Activated T-helper 2 cell treated with anti-CD3 and anti-CD28 coated beads, Interferon-gamma antibody, Interleukin-2, Interleukin-4, amounts not matched to agents 10 μg/mL and 5 μg/mL and 100 μg/mL, durations not matched to agents 14 hours and 24 hours and 36 hours (primary cell): ENCODE measurements at regions of chr20 and their contacts with region 1.

Region 1: GRCh38 chr20:50987592-50988210 is 29.1 kb downstream of the MOCS3 start:
- DNase-seq: peak; percentile 39
- H3K4me3 Mint-ChIP-seq: no peak overlapping the region
- H3K27ac Mint-ChIP-seq: no peak overlapping the region
- H3K4me1 Mint-ChIP-seq: peaks cover under 1% of the 10 kb centered on the region
- H3K27me3 Mint-ChIP-seq: peaks cover 14% of the 10 kb centered on the region

Region 2: GRCh38 chr20:51001758-51002157 is 14.1 kb after region 1 on chr20:
- intact Hi-C with region 1: no loop called
- DNase-seq: no peak
- H3K4me3 Mint-ChIP-seq: no peak overlapping the region
- H3K27ac Mint-ChIP-seq: no peak overlapping the region
- H3K4me1 Mint-ChIP-seq: no peaks in the 10 kb centered on the region
- H3K27me3 Mint-ChIP-seq: peaks cover 10% of the 10 kb centered on the region

Region 3: DNA sequence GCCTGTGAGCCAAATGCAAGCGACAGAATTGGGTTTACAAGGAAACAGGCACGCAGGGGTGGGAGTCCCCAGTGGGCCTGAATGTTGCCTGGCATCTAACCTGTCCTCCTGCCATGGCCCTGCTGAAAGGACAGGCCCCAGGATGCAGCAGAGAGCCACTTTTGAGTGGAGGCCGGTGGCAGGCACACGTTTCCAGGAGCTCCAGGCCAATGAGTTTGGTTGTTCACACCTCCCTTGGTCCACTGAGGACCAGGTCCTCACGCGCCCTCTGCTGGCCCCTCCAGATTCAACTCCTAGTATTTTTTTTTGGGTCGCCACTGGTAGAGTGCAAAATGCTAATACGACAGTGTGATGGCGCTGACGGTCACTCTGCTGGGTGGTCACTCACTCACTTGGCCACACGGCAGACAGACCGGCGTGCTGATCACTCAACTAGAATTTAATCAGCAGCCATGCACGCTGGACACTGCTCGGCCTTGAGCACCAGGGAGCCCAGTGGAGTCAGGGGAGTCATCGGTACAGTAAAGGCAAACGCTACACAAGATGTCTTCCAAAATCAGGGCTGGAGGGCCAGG is 636.5 kb after region 1 on chr20:
- intact Hi-C with region 1: loop called (anchors 10 kb)
- DNase-seq: peak; percentile 44
- H3K4me3 Mint-ChIP-seq: no peak overlapping the region
- H3K27ac Mint-ChIP-seq: no peak overlapping the region
- H3K4me1 Mint-ChIP-seq: peaks cover 15% of the 10 kb centered on the region
- H3K27me3 Mint-ChIP-seq: no peaks in the 10 kb centered on the region